CD4-positive, alpha-beta memory T cell (primary cell): ENCODE measurements at regions of chr22 and their contacts with region 1.

Region 1: DNA sequence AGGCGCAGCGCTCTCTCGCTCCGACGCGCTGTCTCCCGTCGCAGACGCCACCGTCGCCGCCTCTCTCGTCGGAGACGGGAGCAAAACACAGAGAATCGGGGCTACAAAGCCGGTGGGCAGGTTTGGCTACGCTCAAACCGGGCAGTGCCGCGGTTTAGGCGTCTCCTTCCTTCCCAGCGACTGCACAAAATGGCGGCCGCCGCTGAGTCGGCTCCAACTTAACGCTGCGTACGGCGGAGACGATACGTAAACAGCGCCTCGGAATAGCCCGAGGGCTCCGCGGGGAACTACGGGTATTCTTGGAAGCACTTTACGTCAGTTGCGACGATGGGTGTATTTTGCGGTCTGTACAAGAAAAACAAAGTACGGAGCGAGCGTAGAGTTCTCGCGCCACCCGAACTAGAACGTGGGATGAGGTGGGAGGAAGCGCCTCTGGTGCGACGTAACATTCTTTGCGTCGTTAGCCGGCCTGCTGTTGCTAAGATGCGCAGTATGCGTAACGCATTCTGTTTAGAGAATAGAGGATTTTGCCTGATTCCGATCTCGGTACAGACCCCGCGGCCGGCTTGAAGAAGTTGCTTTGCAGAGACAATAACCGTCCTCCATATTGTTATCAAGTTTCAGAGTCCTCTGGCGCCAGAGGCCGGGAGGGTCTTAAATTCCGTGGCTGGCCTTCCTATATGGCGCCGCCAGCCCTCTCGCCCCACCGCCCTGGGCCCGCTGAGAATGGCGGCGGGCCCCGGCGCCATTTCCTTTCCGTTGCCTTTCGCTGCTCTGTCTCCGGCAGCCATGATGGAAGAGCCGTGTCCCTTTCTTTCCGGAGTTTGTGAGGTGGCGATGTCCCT is at the start of gene DDX17:
- DNase-seq: peak; percentile 96 to 98 (median 96)
- H3K4me3 ChIP-seq: peak within 1 kb of the TSS; percentile 75 to 94
- H3K4me3 Mint-ChIP-seq: peak within 1 kb of the TSS; percentile 98 to 100 (median 99)
- H3K27ac ChIP-seq: peak within 1 kb of the TSS; percentile 99
- H3K27ac Mint-ChIP-seq: peak within 1 kb of the TSS; percentile 99 to 100 (median 100)
- H3K4me1 ChIP-seq: peaks cover 44% of the 10 kb centered on the region
- H3K4me1 Mint-ChIP-seq: peaks cover 37 to 54% (median 45%) of the 10 kb centered on the region in 4 donors
- H3K27me3 ChIP-seq: no peaks in the 10 kb centered on the region
- H3K27me3 Mint-ChIP-seq: no peaks in the 10 kb centered on the region
- total RNA-seq, gene DDX17: 927 to 960 TPM

Region 2: DNA sequence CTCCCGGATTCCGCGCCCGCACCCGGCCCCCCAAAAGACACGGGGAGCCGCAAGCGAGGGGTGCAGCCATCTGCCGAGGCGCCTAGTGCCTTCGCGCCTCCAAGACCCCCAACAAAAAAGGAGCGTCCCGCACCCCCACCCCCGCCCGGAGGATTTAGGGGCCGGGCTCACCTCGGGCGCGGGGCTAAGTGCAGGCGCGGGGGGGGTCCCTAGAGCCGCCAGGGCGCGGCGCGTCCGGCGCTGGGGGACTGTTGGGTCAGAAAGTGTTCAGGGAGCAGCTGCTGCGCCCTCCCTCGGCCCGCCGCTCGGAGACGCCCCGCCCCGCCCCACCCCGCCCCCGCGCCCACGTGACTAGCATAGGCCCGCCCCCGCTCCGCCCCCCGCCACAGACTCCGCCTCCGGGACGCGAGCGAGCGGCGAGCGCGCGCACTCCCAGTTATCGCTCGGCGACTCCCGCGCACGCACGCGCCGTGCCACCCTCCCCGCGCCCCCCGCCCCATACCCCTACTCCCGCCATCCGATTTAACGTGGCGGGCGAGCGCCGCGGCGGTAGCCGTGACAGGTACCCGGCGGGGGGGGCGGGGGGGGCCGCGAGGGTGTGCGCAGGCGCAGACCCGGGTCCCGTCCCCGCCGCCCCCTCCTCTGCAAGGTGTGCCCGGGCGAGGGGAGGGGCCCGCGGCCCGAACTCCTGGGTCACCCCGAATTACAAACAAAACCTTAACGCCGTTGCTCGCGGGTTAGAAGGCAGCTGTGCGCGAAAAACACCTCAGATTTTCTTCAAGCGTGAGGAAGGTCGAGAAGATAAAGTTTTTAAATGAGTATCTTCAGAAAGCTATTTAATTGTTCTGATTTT is 107.5 kb before region 1 on chr22:
- CTCF ChIA-PET with region 1: no interaction called
- POLR2A ChIA-PET with region 1: interaction called, 3 read pairs
- intact Hi-C with region 1: loop called (anchors 2 kb)
- DNase-seq: peak; percentile 78 to 85 (median 82)
- H3K4me3 ChIP-seq: peak overlapping the region; percentile 47 to 52
- H3K4me3 Mint-ChIP-seq: peak overlapping the region; percentile 78 to 89 (median 83)
- H3K27ac ChIP-seq: peak overlapping the region; percentile 46
- H3K27ac Mint-ChIP-seq: peak overlapping the region; percentile 37 to 88 (median 79)
- H3K4me1 ChIP-seq: peaks cover 35% of the 10 kb centered on the region
- H3K4me1 Mint-ChIP-seq: peaks cover 16 to 40% (median 23%) of the 10 kb centered on the region in 4 donors
- H3K27me3 ChIP-seq: no peaks in the 10 kb centered on the region
- H3K27me3 Mint-ChIP-seq: peaks cover 0 to 3% of the 10 kb centered on the region in 2 donors

Region 3: DNA sequence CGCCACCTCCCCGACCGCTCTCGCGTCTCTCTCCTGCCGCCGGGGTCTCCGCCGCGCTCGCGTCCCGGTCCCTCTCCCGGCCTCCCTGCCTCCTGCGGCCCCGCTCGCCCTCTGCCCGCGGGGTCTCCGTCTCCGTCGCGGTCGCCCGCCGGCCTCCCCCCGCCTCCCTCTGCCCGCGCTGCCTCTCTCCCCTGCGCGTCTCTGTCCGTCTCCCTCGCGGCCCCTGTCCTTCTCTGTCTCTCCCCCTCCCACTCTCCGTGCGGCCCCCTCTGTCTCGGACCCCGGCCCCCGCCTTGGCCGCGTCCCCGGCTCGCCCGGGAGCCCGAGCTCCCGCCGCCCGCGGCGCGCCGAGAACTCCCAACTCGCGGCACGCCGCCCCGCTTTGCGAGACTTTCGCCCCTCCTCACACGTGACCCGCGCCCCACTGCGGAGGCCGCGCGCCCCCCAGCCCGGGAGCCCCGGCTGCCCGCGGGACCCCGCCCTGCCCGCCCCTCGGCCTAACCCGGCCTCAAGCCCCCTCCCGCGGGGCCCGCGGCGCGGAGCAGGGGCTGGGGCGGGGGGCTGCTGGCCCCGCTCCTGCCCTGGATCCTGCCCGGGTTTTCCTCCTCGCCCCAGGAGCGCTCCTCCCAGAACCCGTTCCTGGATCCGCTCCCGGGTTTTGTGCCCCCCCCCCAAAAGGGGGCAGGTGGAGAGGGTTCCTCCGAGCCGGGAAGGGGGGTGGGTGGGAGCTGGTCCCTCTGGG is 50.6 kb before region 1 on chr22:
- CTCF ChIA-PET with region 1: no interaction called
- POLR2A ChIA-PET with region 1: no interaction called
- intact Hi-C with region 1: no loop called
- DNase-seq: no peak
- H3K4me3 ChIP-seq: no peak overlapping the region
- H3K4me3 Mint-ChIP-seq: peak overlapping the region in 2 of 8 donors; percentile 73 to 88
- H3K27ac ChIP-seq: no peak overlapping the region
- H3K27ac Mint-ChIP-seq: no peak overlapping the region
- H3K4me1 ChIP-seq: peaks cover 8% of the 10 kb centered on the region
- H3K4me1 Mint-ChIP-seq: peaks cover 7 to 30% (median 13%) of the 10 kb centered on the region in 4 donors
- H3K27me3 ChIP-seq: peaks cover 34% of the 10 kb centered on the region
- H3K27me3 Mint-ChIP-seq: peaks cover 40 to 64% of the 10 kb centered on the region in 2 donors

Region 4: GRCh38 chr22:38490915-38491314 is 15.4 kb before region 1 on chr22:
- CTCF ChIA-PET with region 1: interaction called, 7 read pairs
- POLR2A ChIA-PET with region 1: interaction called, 122 read pairs
- intact Hi-C with region 1: loop called (anchors 2 kb)
- DNase-seq: no peak
- H3K4me3 ChIP-seq: no peak overlapping the region
- H3K4me3 Mint-ChIP-seq: no peak overlapping the region
- H3K27ac ChIP-seq: no peak overlapping the region
- H3K27ac Mint-ChIP-seq: peak overlapping the region; percentile 38 to 81 (median 67)
- H3K4me1 ChIP-seq: peaks cover 32% of the 10 kb centered on the region
- H3K4me1 Mint-ChIP-seq: peaks cover 28 to 54% (median 43%) of the 10 kb centered on the region in 4 donors
- H3K27me3 ChIP-seq: no peaks in the 10 kb centered on the region
- H3K27me3 Mint-ChIP-seq: no peaks in the 10 kb centered on the region